Panc1 (cell line): ENCODE measurements at regions of chr5 and their contacts with region 1.

Region 1: DNA sequence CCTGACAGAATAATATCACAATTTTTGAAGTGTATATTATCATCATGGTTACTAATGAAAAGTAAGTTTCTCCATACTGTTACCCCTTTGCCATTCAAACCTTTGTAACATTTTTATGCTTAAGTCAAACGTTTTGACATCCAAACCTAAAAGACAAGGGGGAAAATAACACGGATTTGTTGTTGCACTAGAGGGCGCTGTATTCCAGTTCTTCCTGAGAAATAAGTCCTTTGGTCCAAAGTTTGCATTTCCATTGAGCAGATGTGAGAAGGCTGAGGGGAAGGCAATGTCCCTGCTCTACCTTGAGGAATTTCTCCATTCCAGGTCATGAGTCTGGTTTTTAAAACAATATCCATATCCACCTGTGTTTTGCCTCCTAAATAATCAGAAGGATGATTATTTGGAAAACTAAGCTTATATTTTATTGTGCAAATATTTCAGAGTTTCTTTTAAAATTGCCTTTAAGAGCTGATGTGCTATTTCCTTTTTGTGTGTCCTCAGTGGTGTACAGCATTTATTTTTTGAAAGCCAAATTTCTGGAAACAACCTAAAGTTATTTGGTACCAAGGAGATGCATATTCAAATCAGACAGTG is 9.7 kb downstream of the LECT2 start:
- DNase-seq: peak; percentile 54
- ATAC-seq: peak; percentile 92
- H3K4me3 ChIP-seq: no peak overlapping the region
- H3K27ac ChIP-seq: no peak overlapping the region
- H3K4me1 ChIP-seq: no peaks in the 10 kb centered on the region
- H3K27me3 ChIP-seq: no peaks in the 10 kb centered on the region
- CTCF ChIP-seq: peak; percentile 77

Region 2: GRCh38 chr5:135739383-135739981 is 205.6 kb before region 1 on chr5:
- CTCF ChIA-PET with region 1: no interaction called
- POLR2A ChIA-PET with region 1: no interaction called
- in situ Hi-C with region 1: no loop called
- intact Hi-C with region 1: no loop called
- DNase-seq: no peak
- ATAC-seq: no peak
- H3K4me3 ChIP-seq: no peak overlapping the region
- H3K27ac ChIP-seq: no peak overlapping the region
- H3K4me1 ChIP-seq: no peaks in the 10 kb centered on the region
- H3K27me3 ChIP-seq: no peaks in the 10 kb centered on the region; the same call in 1 of the 2 replicates
- CTCF ChIP-seq: no peak

Region 3: GRCh38 chr5:136062366-136063274 is 117.6 kb after region 1 on chr5:
- CTCF ChIA-PET with region 1: no interaction called
- POLR2A ChIA-PET with region 1: no interaction called
- in situ Hi-C with region 1: no loop called
- intact Hi-C with region 1: loop called (anchors 5 kb)
- DNase-seq: no peak
- ATAC-seq: no peak
- H3K4me3 ChIP-seq: no peak overlapping the region
- H3K27ac ChIP-seq: no peak overlapping the region
- H3K4me1 ChIP-seq: peaks cover 16% of the 10 kb centered on the region
- H3K27me3 ChIP-seq: no peaks in the 10 kb centered on the region
- CTCF ChIP-seq: peak; percentile 72

Region 4: GRCh38 chr5:136080483-136081216 is 135.6 kb after region 1 on chr5:
- CTCF ChIA-PET with region 1: no interaction called
- POLR2A ChIA-PET with region 1: no interaction called
- in situ Hi-C with region 1: no loop called
- intact Hi-C with region 1: loop called (anchors 2 kb)
- DNase-seq: no peak
- ATAC-seq: no peak
- H3K4me3 ChIP-seq: no peak overlapping the region
- H3K27ac ChIP-seq: no peak overlapping the region
- H3K4me1 ChIP-seq: no peaks in the 10 kb centered on the region
- H3K27me3 ChIP-seq: no peaks in the 10 kb centered on the region
- CTCF ChIP-seq: no peak

Region 5: DNA sequence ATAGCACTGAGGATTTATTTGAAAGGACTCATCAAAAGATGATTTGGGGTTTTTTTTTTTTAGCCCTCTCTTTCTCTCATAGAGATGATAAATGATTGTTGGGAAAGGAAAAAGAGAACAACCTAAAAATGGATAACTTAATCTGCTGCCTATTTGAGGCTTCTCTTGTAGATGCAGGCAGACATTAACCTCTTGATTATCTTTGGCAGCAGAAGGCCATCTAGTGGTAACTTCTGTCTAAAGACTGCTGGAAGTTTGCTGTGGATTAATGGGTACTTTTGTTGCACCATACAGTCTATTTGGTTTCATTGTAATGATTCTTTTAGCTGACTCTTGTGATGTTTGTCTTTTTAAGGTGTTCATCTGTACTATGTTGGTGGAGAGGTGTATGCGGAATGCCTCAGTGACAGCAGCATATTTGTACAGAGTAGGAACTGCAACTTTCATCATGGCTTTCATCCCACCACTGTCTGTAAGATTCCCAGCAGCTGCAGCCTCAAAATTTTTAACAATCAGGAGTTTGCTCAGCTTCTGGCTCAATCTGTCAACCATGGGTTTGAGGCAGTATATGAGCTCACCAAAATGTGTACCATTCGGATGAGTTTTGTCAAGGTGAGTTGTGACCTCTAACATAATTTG is 229.1 kb after region 1 on chr5:
- CTCF ChIA-PET with region 1: no interaction called
- POLR2A ChIA-PET with region 1: no interaction called
- in situ Hi-C with region 1: no loop called
- intact Hi-C with region 1: loop called (anchors 5 kb)
- DNase-seq: peak; percentile 47
- ATAC-seq: peak; percentile 94
- H3K4me3 ChIP-seq: no peak overlapping the region
- H3K27ac ChIP-seq: no peak overlapping the region
- H3K4me1 ChIP-seq: no peaks in the 10 kb centered on the region
- H3K27me3 ChIP-seq: no peaks in the 10 kb centered on the region
- CTCF ChIP-seq: peak; percentile 77